GM12878 (cell line): ENCODE measurements at regions of chr3 and their contacts with region 1.

Region 1: GRCh38 chr3:5016218-5017161 is 37.3 kb downstream of the BHLHE40 start:
- DNase-seq: no peak
- ATAC-seq: peak; percentile 63
- H3K4me3 ChIP-seq: no peak overlapping the region
- H3K27ac ChIP-seq: no peak overlapping the region
- H3K4me1 ChIP-seq: peaks cover 43% of the 10 kb centered on the region
- H3K27me3 ChIP-seq: no peaks in the 10 kb centered on the region
- CTCF ChIP-seq: no peak
- EP300 ChIP-seq: peak; percentile 69 to 76; a peak in 2 of 4 replicates
- POLR2A ChIP-seq: no peak
- RAD21 ChIP-seq: no peak

Region 2: DNA sequence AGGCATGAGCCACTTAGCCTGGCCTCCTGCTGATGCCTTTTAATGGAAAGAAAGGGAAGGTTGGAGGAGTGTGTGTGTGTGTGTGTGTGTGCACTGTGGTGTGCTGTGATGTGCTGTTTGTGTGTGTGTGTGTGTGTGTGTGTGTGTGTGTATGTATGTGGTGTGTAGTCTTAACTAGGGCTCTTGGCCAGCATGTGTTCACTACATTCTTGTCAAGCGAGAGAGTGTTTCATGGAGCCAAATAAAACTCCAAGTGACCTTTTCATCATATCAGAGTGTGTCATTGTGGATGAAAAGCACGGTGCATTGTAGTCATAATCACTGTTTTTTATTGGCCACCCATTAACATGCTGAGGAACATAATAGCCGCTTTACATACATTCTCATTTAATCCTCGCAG is 68.1 kb before region 1 on chr3:
- CTCF ChIA-PET with region 1: no interaction called
- POLR2A ChIA-PET with region 1: no interaction called
- RAD21 ChIA-PET with region 1: no interaction called
- SMC1A ChIA-PET with region 1: no interaction called
- in situ Hi-C with region 1: no loop called
- intact Hi-C with region 1: no loop called
- DNase-seq: no peak
- ATAC-seq: no peak
- H3K4me3 ChIP-seq: no peak overlapping the region
- H3K27ac ChIP-seq: no peak overlapping the region
- H3K4me1 ChIP-seq: no peaks in the 10 kb centered on the region
- H3K27me3 ChIP-seq: no peaks in the 10 kb centered on the region
- CTCF ChIP-seq: no peak
- EP300 ChIP-seq: no peak
- POLR2A ChIP-seq: no peak
- RAD21 ChIP-seq: no peak

Region 3: GRCh38 chr3:4994823-4995499 is 21.5 kb before region 1 on chr3:
- CTCF ChIA-PET with region 1: interaction called, 4 read pairs
- POLR2A ChIA-PET with region 1: interaction called, 34 read pairs
- RAD21 ChIA-PET with region 1: interaction called, 33 read pairs
- SMC1A ChIA-PET with region 1: interaction called, 27 read pairs
- in situ Hi-C with region 1: no loop called
- intact Hi-C with region 1: no loop called
- DNase-seq: no peak
- ATAC-seq: peak; percentile 75
- H3K4me3 ChIP-seq: no peak overlapping the region
- H3K27ac ChIP-seq: peak overlapping the region; percentile 7; the same call in 1 of the 2 replicates
- H3K4me1 ChIP-seq: peaks cover 10% of the 10 kb centered on the region
- H3K27me3 ChIP-seq: no peaks in the 10 kb centered on the region
- CTCF ChIP-seq: no peak
- EP300 ChIP-seq: no peak
- POLR2A ChIP-seq: 0 out of 2 replicates have a peak, but pooled peaks have one; percentile 31
- RAD21 ChIP-seq: no peak

Region 4: GRCh38 chr3:5035692-5036391 is 19.4 kb after region 1 on chr3:
- CTCF ChIA-PET with region 1: interaction called, 25 read pairs
- POLR2A ChIA-PET with region 1: interaction called, 11 read pairs
- RAD21 ChIA-PET with region 1: interaction called, 4 read pairs
- SMC1A ChIA-PET with region 1: interaction called, 16 read pairs
- in situ Hi-C with region 1: no loop called
- intact Hi-C with region 1: no loop called
- DNase-seq: no peak
- ATAC-seq: peak; percentile 72
- H3K4me3 ChIP-seq: no peak overlapping the region
- H3K27ac ChIP-seq: no peak overlapping the region
- H3K4me1 ChIP-seq: peaks cover 14% of the 10 kb centered on the region
- H3K27me3 ChIP-seq: no peaks in the 10 kb centered on the region
- CTCF ChIP-seq: no peak
- EP300 ChIP-seq: no peak
- POLR2A ChIP-seq: no peak
- RAD21 ChIP-seq: no peak

Region 5: GRCh38 chr3:5080779-5081525 is 64.5 kb after region 1 on chr3:
- CTCF ChIA-PET with region 1: no interaction called
- POLR2A ChIA-PET with region 1: no interaction called
- RAD21 ChIA-PET with region 1: no interaction called
- SMC1A ChIA-PET with region 1: no interaction called
- in situ Hi-C with region 1: no loop called
- intact Hi-C with region 1: no loop called
- DNase-seq: no peak
- ATAC-seq: no peak
- H3K4me3 ChIP-seq: no peak overlapping the region
- H3K27ac ChIP-seq: no peak overlapping the region
- H3K4me1 ChIP-seq: no peaks in the 10 kb centered on the region
- H3K27me3 ChIP-seq: 0 out of 4 replicates have a peak, but pooled peaks cover 0 to 2% of the 10 kb centered on the region in 2 experiments
- CTCF ChIP-seq: no peak
- EP300 ChIP-seq: no peak
- POLR2A ChIP-seq: no peak
- RAD21 ChIP-seq: no peak